Head of caudate nucleus (tissue), 42 donors: ENCODE measurements at regions of chr6 and their contacts with region 1.

Region 1: DNA sequence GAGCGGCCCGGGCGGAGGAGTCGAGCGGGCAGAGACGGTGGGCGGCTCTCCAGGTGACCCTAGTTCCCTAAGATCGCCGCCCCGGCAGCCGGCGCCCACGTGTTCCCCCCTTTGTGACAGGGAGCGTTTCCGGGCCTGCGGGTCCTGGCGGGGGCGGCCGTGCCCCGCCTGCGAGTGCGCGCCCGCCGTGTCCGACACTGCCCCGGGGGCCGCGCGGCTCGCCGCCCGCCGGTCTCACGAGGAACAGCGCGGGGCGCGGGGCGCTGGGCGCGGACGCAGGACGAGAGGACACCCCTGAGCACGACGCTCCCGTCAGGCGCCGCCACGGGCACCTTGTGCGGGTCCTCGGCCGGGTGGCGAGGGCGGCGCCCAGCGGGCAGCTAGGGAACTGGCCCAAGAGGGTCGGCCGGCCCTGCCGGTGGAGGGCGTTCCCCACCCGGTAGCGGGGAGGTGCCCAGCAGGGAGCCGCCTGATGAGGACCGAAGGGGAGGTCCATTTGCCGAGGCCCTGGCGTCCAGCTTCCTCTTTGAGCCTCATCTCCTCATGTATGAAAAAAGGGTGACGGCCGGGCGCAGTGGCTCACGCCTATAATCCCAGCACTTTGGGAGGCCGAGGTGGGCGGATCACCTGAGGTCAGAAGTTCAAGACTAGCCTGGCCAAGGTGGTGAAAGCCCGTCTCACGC is at the start of gene VARS1:
- DNase-seq: peak; percentile 66 to 96 (median 89)

Region 2: DNA sequence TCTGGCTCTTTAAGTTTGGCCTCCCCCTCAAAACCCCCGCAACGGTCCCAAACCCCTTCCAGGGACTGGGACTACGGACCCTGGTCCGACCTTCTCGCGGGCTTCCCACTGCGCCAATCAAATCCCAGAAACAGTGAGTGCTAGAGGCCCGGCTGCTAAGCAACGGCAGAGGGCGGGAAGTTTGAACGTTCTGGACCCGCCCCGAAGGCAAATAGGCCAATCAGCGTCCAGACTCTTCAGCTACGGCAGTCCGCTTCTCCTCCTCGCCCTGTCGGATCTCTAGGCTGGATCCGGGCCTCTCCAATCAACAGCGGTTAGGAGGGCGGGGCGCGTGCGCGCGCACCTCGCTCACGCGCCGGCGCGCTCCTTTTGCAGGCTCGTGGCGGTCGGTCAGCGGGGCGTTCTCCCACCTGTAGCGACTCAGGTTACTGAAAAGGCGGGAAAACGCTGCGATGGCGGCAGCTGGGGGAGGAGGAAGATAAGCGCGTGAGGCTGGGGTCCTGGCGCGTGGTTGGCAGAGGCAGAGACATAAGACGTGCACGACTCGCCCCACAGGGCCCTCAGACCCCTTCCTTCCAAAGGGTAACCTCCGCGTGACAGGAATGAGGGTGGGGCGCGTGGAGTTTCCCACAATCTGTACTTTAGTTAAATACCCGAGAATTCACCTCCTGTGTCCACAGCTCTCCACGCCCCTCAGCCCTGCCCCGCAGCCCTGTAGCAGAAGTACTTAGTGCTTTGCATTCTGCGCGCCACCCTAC is 55.9 kb before region 1 on chr6 and contains the start of gene MSH5:
- intact Hi-C with region 1: loop called (anchors 5 kb)
- DNase-seq: peak; percentile 95 to 99 (median 98)